ENCODE measurements at regions of chr5 and their contacts with region 1.

Region 1: DNA sequence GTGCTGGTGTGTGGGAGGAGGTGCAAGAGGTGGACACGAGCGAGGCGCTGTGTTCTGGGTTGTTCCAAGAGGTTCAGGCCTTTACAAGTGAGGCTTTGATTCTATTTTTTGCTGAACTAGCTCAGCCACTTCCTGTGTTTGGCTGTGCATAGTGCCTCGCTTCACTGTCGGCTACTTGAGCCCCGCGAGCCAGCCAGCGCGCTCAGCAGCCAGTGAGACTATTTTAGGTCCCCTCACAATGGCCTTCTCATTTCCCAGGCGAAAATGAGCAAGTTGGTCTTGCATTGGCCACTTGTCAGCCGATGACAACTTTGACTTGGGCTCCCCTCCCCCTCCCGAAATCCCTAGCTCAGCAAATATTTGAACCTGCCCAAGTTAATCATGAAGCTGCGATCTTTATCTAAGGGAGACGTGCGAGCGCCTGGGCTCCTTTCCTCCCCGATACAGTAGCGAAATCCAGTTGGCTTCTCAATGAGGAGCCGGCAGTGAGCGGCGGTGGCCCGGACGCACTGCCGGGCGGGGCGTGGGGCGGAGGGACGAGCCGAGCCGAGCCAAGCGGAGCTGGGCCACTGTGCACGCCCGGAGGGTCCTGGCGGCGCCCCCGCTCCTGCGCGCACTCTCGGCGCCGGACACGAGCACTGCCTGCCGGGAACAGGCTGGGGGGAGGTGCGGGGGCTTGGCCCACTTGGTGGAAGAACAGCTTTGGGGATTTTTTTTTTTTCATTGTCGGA is 72.6 kb downstream of the PIK3R1 start:
- DNase-seq: peak in 1 of 2 experiments; percentile 33
- H3K4me3 ChIP-seq: no peak overlapping the region
- H3K27ac ChIP-seq: no peak overlapping the region
- H3K4me1 ChIP-seq: peaks cover 4% of the 10 kb centered on the region; the same call in 1 of the 2 replicates
- H3K27me3 ChIP-seq: no peaks in the 10 kb centered on the region
- CTCF ChIP-seq: no peak

Region 2: GRCh38 chr5:67989456-67989855 is 298.7 kb before region 1 on chr5:
- CTCF ChIA-PET with region 1: no interaction called
- POLR2A ChIA-PET with region 1: no interaction called
- intact Hi-C with region 1: no loop called
- DNase-seq: no peak
- H3K4me3 ChIP-seq: no peak overlapping the region
- H3K27ac ChIP-seq: no peak overlapping the region
- H3K4me1 ChIP-seq: no peaks in the 10 kb centered on the region
- H3K27me3 ChIP-seq: no peaks in the 10 kb centered on the region
- CTCF ChIP-seq: no peak

Region 3: DNA sequence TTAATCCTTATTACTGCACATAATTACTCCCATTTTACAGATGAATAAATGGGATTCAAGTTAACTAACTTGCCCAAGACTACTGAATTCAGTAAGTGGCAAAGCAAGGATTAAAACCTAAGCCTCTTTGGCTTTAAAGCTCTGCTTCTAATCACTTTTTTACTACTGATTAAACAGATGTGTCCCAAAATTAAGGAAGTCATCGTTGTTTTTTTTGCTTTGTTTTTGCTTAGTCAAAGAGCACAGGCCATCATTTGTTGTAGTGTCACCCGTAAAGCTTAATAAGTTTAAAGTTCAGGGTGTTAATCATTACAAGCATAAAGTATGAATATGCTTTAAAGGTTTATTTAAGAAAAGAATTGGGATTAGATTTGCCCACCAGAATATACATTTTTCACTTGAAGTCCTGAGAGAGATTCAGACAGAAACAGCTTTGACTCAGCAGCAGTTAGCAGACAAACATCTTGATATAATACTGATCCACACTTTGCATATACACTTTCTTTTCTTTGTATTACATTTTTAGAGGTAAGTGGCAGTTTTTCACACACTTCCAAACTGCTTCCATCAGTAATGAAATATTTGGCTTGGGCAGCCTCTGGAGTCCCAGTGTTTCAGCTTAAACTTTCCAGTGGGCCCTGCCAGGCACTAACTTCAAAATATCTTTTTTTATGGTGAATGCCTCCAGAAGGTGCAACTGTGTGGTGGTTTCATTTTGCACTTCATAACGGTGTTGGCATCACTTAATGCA is 19.9 kb before region 1 on chr5:
- CTCF ChIA-PET with region 1: no interaction called
- POLR2A ChIA-PET with region 1: no interaction called
- intact Hi-C with region 1: no loop called
- DNase-seq: no peak
- H3K4me3 ChIP-seq: no peak overlapping the region
- H3K27ac ChIP-seq: no peak overlapping the region
- H3K4me1 ChIP-seq: no peaks in the 10 kb centered on the region
- H3K27me3 ChIP-seq: no peaks in the 10 kb centered on the region
- CTCF ChIP-seq: no peak

Region 4: GRCh38 chr5:68315679-68316271 is 27.6 kb after region 1 on chr5:
- CTCF ChIA-PET with region 1: no interaction called
- POLR2A ChIA-PET with region 1: no interaction called
- intact Hi-C with region 1: no loop called
- DNase-seq: peak in 1 of 2 experiments; percentile 47
- H3K4me3 ChIP-seq: no peak overlapping the region
- H3K27ac ChIP-seq: no peak overlapping the region
- H3K4me1 ChIP-seq: peaks cover 42% of the 10 kb centered on the region
- H3K27me3 ChIP-seq: no peaks in the 10 kb centered on the region
- CTCF ChIP-seq: no peak

Region 5: GRCh38 chr5:68331192-68332079 is 43.3 kb after region 1 on chr5:
- CTCF ChIA-PET with region 1: interaction called, 4 read pairs
- POLR2A ChIA-PET with region 1: no interaction called
- intact Hi-C with region 1: loop called (anchors 1 kb)
- DNase-seq: no peak
- H3K4me3 ChIP-seq: no peak overlapping the region
- H3K27ac ChIP-seq: no peak overlapping the region
- H3K4me1 ChIP-seq: peaks cover 30% of the 10 kb centered on the region
- H3K27me3 ChIP-seq: no peaks in the 10 kb centered on the region
- CTCF ChIP-seq: no peak

Region 6: DNA sequence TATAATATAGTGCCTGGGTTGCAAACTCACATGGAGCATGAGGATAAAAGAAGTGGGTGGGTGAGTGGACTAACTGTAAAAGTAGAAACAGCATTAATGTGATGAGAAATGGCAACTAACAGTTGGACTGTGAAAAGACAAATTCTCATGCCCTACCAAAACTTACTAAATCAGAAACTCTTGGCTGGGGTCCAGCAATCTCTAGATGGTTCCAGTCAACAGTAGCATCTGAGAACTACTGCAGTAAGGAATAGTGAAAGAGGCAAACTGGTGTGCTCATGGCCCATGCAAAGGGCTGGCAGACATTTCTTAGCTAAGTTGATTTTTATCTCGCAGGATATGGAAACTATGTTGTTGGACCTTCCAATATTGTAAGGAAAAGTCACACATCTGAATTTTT is 77.7 kb after region 1 on chr5:
- CTCF ChIA-PET with region 1: no interaction called
- POLR2A ChIA-PET with region 1: no interaction called
- intact Hi-C with region 1: no loop called
- DNase-seq: no peak
- H3K4me3 ChIP-seq: no peak overlapping the region
- H3K27ac ChIP-seq: no peak overlapping the region
- H3K4me1 ChIP-seq: peaks cover 5% of the 10 kb centered on the region; the same call in 1 of the 2 replicates
- H3K27me3 ChIP-seq: no peaks in the 10 kb centered on the region
- CTCF ChIP-seq: no peak

Region 7: DNA sequence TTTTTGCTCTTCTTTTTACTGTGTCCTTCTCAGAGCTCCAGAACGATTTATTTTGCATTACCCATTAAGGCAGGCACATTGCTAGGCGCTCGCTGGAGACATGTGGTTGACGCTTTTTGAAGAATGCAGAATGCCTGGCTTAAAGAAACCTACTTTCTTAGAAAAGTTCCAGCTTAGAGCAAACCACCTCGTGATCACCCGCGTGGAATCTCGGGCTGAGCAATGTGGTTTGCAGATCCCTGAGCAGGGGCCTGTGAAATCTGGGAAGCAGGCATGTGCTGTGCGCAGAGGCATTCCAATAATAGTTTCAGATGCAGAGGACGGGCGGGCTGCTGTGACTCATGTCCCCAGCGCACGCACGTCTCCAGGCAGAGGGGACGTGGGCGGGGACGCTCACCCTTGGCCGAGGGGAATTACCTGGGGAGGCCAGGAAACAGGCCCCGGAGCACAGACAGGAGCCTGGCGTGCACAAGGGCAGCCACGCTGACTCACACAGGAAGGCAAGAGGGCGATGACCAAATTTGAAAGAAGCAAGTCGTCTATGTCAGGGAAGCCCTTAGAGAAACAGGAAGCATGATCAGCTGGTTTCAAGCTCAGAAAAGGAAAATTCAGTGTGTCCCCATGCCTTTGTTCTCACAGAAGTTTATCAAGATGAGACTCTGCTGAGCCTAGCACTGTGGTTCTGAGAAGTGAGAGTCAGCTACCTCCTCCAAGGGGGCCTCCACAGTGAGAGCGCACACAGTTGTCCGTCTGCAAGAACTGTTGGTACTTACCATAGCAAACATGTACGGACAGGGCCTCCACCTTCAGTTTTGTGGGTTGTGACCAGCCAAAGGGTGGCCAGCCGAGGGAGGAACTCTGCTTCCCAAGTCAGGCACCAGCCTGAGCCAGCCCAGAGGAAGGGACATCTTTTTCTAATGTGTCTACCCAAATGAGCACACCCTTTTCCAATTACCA is 146.1 kb after region 1 on chr5:
- CTCF ChIA-PET with region 1: no interaction called
- POLR2A ChIA-PET with region 1: no interaction called
- intact Hi-C with region 1: loop called (anchors 1 kb)
- DNase-seq: peak; percentile 96 to 98
- H3K4me3 ChIP-seq: no peak overlapping the region
- H3K27ac ChIP-seq: peak overlapping the region; percentile 76
- H3K4me1 ChIP-seq: peaks cover 32% of the 10 kb centered on the region
- H3K27me3 ChIP-seq: no peaks in the 10 kb centered on the region
- CTCF ChIP-seq: no peak

Region 8: DNA sequence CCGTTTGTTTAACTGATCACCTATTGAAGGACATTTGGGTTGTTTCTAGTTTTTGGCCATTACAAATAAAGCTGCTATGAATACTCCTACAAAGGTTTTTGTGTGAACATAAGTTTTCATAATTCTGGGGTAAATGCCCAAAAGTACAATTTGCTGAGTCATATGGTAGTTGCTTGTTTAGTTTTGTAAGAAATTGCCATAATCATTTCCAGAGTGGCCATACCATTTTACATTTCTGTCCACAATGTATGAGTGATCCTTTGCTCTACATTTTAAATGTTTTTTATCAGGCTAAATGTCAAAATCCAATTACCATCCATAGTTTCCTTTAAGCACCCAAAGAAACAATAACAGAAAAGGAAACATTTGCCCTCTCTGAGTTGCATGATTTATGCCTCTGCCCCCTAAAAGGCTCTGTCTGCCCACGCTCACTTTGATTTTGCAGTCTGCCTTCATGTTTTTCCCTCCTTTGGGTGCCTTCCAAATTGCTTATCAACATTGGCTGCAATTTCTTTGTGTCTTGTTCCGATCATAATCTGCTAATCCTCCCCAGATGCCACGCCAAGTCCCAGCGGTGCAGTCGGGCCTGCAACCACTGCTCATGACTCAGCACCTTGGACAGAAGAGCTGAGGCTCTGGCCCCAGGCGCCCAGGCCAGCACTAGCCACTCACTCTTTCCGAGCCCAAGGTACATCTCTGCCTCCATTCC is 266.6 kb after region 1 on chr5:
- CTCF ChIA-PET with region 1: no interaction called
- POLR2A ChIA-PET with region 1: no interaction called
- intact Hi-C with region 1: loop called (anchors 2 kb)
- DNase-seq: peak in 1 of 2 experiments; percentile 69
- H3K4me3 ChIP-seq: no peak overlapping the region
- H3K27ac ChIP-seq: no peak overlapping the region
- H3K4me1 ChIP-seq: peaks cover 37% of the 10 kb centered on the region
- H3K27me3 ChIP-seq: no peaks in the 10 kb centered on the region
- CTCF ChIP-seq: no peak

Region 9: DNA sequence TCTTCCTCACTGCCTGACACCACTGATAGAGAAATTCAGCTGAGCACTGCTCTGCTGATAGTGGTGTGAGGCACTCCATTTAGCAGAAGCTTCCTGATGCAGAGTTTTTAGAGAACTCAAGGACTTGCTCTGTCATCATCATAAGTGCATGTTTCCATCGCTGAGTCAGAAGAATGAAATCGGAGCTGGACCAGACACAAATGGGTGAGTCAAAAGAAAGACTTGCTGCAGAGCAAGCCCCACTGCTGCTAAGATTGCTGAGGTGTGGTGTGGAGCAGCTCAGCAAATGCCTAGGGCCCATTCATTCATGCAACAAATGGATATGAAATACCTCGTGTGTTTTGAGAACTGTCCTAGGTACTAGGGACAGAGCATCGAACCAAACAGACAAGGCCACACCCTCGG is 395.5 kb after region 1 on chr5:
- CTCF ChIA-PET with region 1: no interaction called
- POLR2A ChIA-PET with region 1: no interaction called
- intact Hi-C with region 1: loop called (anchors 5 kb)
- DNase-seq: peak; percentile 77 to 97
- H3K4me3 ChIP-seq: no peak overlapping the region
- H3K27ac ChIP-seq: peak overlapping the region; percentile 42
- H3K4me1 ChIP-seq: peaks cover 31% of the 10 kb centered on the region
- H3K27me3 ChIP-seq: no peaks in the 10 kb centered on the region
- CTCF ChIP-seq: no peak

Region 10: GRCh38 chr5:68962757-68963484 is 674.8 kb after region 1 on chr5:
- CTCF ChIA-PET with region 1: no interaction called
- POLR2A ChIA-PET with region 1: no interaction called
- intact Hi-C with region 1: loop called (anchors 1 kb)
- DNase-seq: peak; percentile 42 to 62
- H3K4me3 ChIP-seq: no peak overlapping the region
- H3K27ac ChIP-seq: no peak overlapping the region
- H3K4me1 ChIP-seq: no peaks in the 10 kb centered on the region
- H3K27me3 ChIP-seq: no peaks in the 10 kb centered on the region
- CTCF ChIP-seq: peak; percentile 83

Region 11: GRCh38 chr5:69007726-69008368 is 719.7 kb after region 1 on chr5:
- CTCF ChIA-PET with region 1: no interaction called
- POLR2A ChIA-PET with region 1: no interaction called
- intact Hi-C with region 1: loop called (anchors 1 kb)
- DNase-seq: peak; percentile 46 to 60
- H3K4me3 ChIP-seq: no peak overlapping the region
- H3K27ac ChIP-seq: no peak overlapping the region
- H3K4me1 ChIP-seq: no peaks in the 10 kb centered on the region
- H3K27me3 ChIP-seq: no peaks in the 10 kb centered on the region
- CTCF ChIP-seq: peak; percentile 91